ENCODE measurements at regions of chr1 and their contacts with region 1.

Region 1: DNA sequence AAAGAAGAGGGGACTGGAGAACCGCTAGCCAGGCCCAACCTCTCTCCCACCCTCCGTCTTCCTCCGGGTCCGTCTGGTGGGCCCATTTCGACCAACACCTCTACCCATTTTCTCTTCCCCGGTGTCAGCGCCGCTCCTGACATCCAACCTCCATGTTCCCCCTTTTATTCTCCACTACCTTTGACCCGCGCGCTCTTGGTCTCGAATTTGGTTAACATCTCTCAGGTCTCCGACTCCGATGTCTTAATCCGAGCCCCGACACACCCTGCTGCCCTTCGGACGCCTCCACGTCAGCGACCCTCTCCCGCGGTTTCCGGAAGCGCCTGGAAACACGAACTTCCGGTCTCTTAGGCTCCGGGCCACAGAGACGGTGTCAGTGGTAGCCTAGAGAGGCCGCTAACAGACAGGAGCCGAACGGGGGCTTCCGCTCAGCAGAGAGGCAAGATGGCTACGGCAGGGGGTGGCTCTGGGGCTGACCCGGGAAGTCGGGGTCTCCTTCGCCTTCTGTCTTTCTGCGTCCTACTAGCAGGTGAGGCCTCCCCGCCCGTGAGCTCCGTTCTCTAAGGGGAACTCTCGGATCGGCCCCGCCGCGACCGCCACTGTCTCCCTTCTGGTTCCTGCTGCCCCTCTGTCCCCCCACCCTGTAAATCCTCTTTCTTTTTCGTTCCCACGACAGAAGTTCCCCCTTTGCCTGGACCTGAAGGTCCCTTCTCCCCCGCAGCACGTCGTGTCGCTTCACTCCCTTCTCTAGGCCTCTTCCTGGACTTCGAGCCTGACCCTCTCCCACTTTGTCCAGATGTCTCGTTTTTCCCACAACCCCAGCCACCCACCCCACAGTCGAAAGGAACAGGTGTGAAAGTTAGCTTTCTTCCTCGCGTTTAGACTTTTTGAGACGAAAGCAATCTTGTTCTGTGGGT is at the starts of genes COPA and NCSTN:
- DNase-seq: peak; percentile 98
- H3K4me3 ChIP-seq: peak within 1 kb of the TSS; percentile 72 to 91 (median 87)
- H3K27ac ChIP-seq: peak within 1 kb of the TSS; percentile 81 to 93 (median 86)
- H3K4me1 ChIP-seq: peaks cover 26 to 54% (median 41%) of the 10 kb centered on the region in 4 donors
- H3K27me3 ChIP-seq: no peaks in the 10 kb centered on the region
- CTCF ChIP-seq: peak in 1 of 3 experiments; percentile 18
- EP300 ChIP-seq: no peak
- POLR2A ChIP-seq: peak; percentile 86
- total RNA-seq, gene COPA: 108 to 125 (median 116) TPM
- total RNA-seq, gene NCSTN: 45.6 to 59.7 (median 52.1) TPM

Region 2: GRCh38 chr1:160291248-160292220 is 51.7 kb before region 1 on chr1:
- intact Hi-C with region 1: loop called (anchors 5 kb)
- DNase-seq: peak; percentile 93
- H3K4me3 ChIP-seq: no peak overlapping the region
- H3K27ac ChIP-seq: no peak overlapping the region
- H3K4me1 ChIP-seq: peaks cover 0 to 7% (median 2%) of the 10 kb centered on the region in 4 donors
- H3K27me3 ChIP-seq: no peaks in the 10 kb centered on the region
- CTCF ChIP-seq: peak; percentile 81 to 87 (median 82)
- EP300 ChIP-seq: no peak
- POLR2A ChIP-seq: no peak

Region 3: DNA sequence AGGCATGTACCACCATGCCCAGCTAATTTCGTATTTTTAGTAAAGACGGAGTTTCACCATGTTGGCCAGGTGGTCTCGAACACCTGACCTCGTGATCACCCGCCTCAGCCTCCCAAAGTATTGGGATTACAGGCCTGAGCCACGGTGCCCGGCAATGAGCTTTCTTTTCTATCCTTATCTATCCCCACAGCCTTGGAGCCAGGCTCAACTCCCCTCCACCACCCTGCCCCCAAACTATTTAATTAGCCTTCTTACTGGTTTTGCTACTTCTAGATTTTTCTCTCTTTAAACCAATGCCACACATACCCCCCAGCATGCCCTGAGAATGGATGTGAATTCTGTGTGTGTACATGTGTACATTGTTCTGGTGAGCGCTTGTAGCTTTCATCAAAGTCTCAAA is 51.5 kb after region 1 on chr1:
- intact Hi-C with region 1: loop called (anchors 2 kb)
- DNase-seq: no peak
- H3K4me3 ChIP-seq: no peak overlapping the region
- H3K27ac ChIP-seq: no peak overlapping the region
- H3K4me1 ChIP-seq: peaks cover under 1 to 3% (median 2%) of the 10 kb centered on the region in 4 donors
- H3K27me3 ChIP-seq: peaks cover 0 to 7% (median 0%) of the 10 kb centered on the region in 4 donors
- CTCF ChIP-seq: no peak
- EP300 ChIP-seq: no peak
- POLR2A ChIP-seq: no peak

Region 4: GRCh38 chr1:160720356-160721085 is 377.3 kb after region 1 on chr1:
- intact Hi-C with region 1: no loop called
- DNase-seq: no peak
- H3K4me3 ChIP-seq: no peak overlapping the region
- H3K27ac ChIP-seq: no peak overlapping the region
- H3K4me1 ChIP-seq: no peaks in the 10 kb centered on the region
- H3K27me3 ChIP-seq: peaks cover 0 to 6% (median 0%) of the 10 kb centered on the region in 4 donors
- CTCF ChIP-seq: no peak
- EP300 ChIP-seq: no peak
- POLR2A ChIP-seq: no peak